ENCODE measurements at regions of chr15 and their contacts with region 1.

Region 1: GRCh38 chr15:42920519-42921227 is at the start of gene TTBK2:
- DNase-seq: peak; percentile 99
- ATAC-seq: peak; percentile 95
- H3K4me3 ChIP-seq: peak within 1 kb of the TSS; percentile 67 to 94 (median 73)
- H3K4me3 Mint-ChIP-seq: peak within 1 kb of the TSS; percentile 90
- H3K27ac ChIP-seq: peak within 1 kb of the TSS; percentile 41 to 46
- H3K27ac Mint-ChIP-seq: peak within 1 kb of the TSS; percentile 92
- H3K4me1 ChIP-seq: peaks cover 12 to 23% of the 10 kb centered on the region in 2 donors
- H3K4me1 Mint-ChIP-seq: peaks cover 34% of the 10 kb centered on the region
- H3K27me3 ChIP-seq: no peaks in the 10 kb centered on the region
- H3K27me3 Mint-ChIP-seq: no peaks in the 10 kb centered on the region
- CTCF ChIP-seq: peak; percentile 16
- total RNA-seq, gene TTBK2: 38.7 and 39.6 TPM in 2 replicates

Region 2: DNA sequence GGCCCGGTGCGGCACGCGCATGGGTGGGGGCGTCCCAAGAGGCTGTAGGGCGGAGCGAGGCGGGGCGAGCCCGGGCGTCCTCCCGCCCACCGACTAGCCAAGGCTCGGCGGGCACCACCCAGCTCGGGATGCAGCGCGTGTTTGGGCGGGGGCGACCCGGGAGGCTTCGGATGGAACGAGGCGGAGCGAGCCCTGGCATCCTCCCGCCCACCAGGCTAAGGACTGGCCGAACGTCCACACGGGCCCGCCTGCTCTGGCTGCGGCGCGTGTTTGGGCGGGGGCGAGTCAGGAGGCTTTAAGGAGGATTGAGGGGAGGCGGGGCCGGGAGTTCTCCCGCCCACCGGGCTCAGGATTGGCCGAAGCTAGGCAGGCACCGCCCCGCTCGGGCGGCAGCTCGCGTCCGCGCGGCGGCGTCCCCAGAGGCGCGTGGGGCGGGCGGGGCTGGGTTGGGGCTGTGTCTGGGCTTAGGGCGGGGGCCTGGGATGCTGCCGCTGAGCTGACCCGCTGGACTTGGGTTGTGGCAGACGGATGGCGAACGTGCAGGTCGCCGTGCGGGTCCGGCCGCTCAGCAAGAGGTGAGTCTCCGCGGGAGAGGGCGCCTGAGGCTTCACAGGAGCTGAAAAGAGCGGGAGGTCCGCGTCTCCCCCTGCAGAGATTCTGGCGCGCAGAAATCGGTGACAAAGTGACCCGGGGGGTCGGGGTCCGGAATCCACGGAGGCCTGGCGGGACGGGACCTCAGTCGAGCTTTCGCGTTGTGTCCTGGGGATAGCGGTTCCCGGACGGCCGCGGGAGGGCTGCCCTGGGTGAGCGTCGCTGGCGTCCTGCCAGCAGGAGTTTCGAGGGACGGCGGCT is 345.3 kb before region 1 on chr15 and contains the start of gene STARD9:
- CTCF ChIA-PET with region 1: interaction called, 3 read pairs
- POLR2A ChIA-PET with region 1: no interaction called
- intact Hi-C with region 1: loop called (anchors 1 kb)
- DNase-seq: peak; percentile 98
- ATAC-seq: peak; percentile 88
- H3K4me3 ChIP-seq: peak within 1 kb of the TSS; percentile 61 to 93 (median 88)
- H3K4me3 Mint-ChIP-seq: peak within 1 kb of the TSS; percentile 96
- H3K27ac ChIP-seq: peak within 1 kb of the TSS; percentile 67 to 69
- H3K27ac Mint-ChIP-seq: peak within 1 kb of the TSS; percentile 89
- H3K4me1 ChIP-seq: peaks cover 14 to 15% of the 10 kb centered on the region in 2 donors
- H3K4me1 Mint-ChIP-seq: peaks cover 19% of the 10 kb centered on the region
- H3K27me3 ChIP-seq: peaks cover 0 to 4% (median 0%) of the 10 kb centered on the region in 4 experiments
- H3K27me3 Mint-ChIP-seq: peaks cover 9% of the 10 kb centered on the region
- CTCF ChIP-seq: no peak
- total RNA-seq, gene STARD9: 20.8 and 23.1 TPM in 2 replicates

Region 3: DNA sequence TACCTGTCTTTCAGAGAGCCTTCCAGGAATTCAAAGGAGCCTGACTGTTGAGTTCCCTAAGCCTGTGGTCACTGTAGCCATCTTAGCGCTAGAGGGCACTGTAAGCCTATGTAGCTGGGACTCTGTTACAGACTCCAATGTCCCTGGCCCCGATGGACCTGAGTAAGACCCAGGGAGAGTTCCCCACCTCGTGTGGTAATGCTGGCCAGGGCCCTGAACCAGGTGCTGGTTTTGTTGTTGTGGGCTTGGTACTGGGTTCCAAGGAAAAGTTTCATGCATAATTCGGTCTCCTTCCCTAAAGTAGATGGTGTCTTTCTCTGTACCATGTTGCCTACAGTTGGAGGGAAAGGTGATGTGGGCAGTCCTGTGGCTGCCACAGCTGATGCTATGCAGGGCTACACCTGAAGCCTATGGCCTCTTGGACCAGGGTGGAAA is 216.2 kb before region 1 on chr15:
- CTCF ChIA-PET with region 1: interaction called, 85 read pairs
- POLR2A ChIA-PET with region 1: interaction called, 5 read pairs
- intact Hi-C with region 1: no loop called
- DNase-seq: peak; percentile 73
- ATAC-seq: peak; percentile 89
- H3K4me3 ChIP-seq: no peak overlapping the region
- H3K4me3 Mint-ChIP-seq: no peak overlapping the region
- H3K27ac ChIP-seq: no peak overlapping the region
- H3K27ac Mint-ChIP-seq: no peak overlapping the region
- H3K4me1 ChIP-seq: no peaks in the 10 kb centered on the region
- H3K4me1 Mint-ChIP-seq: no peaks in the 10 kb centered on the region
- H3K27me3 ChIP-seq: no peaks in the 10 kb centered on the region
- H3K27me3 Mint-ChIP-seq: no peaks in the 10 kb centered on the region
- CTCF ChIP-seq: peak; percentile 78

Region 4: GRCh38 chr15:43185157-43186017 is 264.7 kb after region 1 on chr15 and contains the start of gene CCNDBP1:
- CTCF ChIA-PET with region 1: no interaction called
- POLR2A ChIA-PET with region 1: no interaction called
- intact Hi-C with region 1: loop called (anchors 2 kb)
- DNase-seq: peak; percentile 92
- ATAC-seq: peak; percentile 93
- H3K4me3 ChIP-seq: peak within 1 kb of the TSS; percentile 43 to 94 (median 75)
- H3K4me3 Mint-ChIP-seq: peak within 1 kb of the TSS; percentile 99
- H3K27ac ChIP-seq: peak within 1 kb of the TSS; percentile 87 to 94
- H3K27ac Mint-ChIP-seq: peak within 1 kb of the TSS; percentile 98
- H3K4me1 ChIP-seq: peaks cover 21 to 32% of the 10 kb centered on the region in 2 donors
- H3K4me1 Mint-ChIP-seq: peaks cover 38% of the 10 kb centered on the region
- H3K27me3 ChIP-seq: no peaks in the 10 kb centered on the region
- H3K27me3 Mint-ChIP-seq: no peaks in the 10 kb centered on the region
- CTCF ChIP-seq: peak; percentile 67
- total RNA-seq, gene CCNDBP1: 113 and 116 TPM in 2 replicates

Region 5: GRCh38 chr15:43294091-43294925 is 373.6 kb after region 1 on chr15:
- CTCF ChIA-PET with region 1: no interaction called
- POLR2A ChIA-PET with region 1: no interaction called
- intact Hi-C with region 1: no loop called
- DNase-seq: no peak
- ATAC-seq: no peak
- H3K4me3 ChIP-seq: no peak overlapping the region
- H3K4me3 Mint-ChIP-seq: no peak overlapping the region
- H3K27ac ChIP-seq: no peak overlapping the region
- H3K27ac Mint-ChIP-seq: peak overlapping the region; percentile 41
- H3K4me1 ChIP-seq: peaks cover 4 to 8% of the 10 kb centered on the region in 2 donors
- H3K4me1 Mint-ChIP-seq: peaks cover 8% of the 10 kb centered on the region
- H3K27me3 ChIP-seq: peaks cover 0 to 15% (median 7%) of the 10 kb centered on the region in 4 experiments
- H3K27me3 Mint-ChIP-seq: peaks cover 48% of the 10 kb centered on the region
- CTCF ChIP-seq: no peak

Measured in B cell (primary cell).